SK-N-SH (cell line): ENCODE measurements at regions of chr18 and their contacts with region 1.

Region 1: DNA sequence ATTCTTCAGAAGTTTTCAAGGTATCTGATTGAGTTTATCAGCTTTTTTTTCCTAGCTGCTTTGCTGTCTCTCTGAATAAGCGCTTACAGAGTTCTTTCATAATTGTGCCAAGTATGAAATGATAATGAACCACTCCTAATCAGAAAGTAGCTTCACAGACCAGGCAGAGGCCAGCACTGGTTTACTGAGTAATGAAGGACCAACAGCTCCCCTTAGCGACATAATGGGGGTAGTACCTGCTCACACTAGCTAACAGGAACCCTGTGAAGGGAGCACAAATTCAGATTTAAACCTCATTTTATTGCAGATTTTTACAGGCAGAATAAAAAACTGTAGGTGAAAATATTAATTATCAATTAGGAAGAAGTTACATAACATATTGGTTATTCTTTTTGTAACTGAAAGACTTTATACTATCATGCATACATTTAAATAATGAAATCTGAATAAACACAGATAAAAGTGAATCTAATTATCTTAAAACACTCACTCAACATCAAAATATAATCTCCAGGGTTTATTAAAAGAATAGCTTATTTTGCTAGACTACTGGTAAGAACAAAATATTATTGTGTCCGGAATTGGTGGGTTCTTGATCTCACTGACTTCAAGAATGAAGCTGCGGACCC is 53.7 kb upstream of the LRRC30 start:
- DNase-seq: peak; percentile 86
- H3K4me3 ChIP-seq: no peak overlapping the region; a peak in 1 of 4 replicates
- H3K27ac ChIP-seq: no peak overlapping the region
- H3K4me1 ChIP-seq: no peaks in the 10 kb centered on the region
- H3K27me3 ChIP-seq: no peaks in the 10 kb centered on the region
- CTCF ChIP-seq: peak; percentile 58
- EP300 ChIP-seq: no peak
- RAD21 ChIP-seq: peak; percentile 91

Region 2: DNA sequence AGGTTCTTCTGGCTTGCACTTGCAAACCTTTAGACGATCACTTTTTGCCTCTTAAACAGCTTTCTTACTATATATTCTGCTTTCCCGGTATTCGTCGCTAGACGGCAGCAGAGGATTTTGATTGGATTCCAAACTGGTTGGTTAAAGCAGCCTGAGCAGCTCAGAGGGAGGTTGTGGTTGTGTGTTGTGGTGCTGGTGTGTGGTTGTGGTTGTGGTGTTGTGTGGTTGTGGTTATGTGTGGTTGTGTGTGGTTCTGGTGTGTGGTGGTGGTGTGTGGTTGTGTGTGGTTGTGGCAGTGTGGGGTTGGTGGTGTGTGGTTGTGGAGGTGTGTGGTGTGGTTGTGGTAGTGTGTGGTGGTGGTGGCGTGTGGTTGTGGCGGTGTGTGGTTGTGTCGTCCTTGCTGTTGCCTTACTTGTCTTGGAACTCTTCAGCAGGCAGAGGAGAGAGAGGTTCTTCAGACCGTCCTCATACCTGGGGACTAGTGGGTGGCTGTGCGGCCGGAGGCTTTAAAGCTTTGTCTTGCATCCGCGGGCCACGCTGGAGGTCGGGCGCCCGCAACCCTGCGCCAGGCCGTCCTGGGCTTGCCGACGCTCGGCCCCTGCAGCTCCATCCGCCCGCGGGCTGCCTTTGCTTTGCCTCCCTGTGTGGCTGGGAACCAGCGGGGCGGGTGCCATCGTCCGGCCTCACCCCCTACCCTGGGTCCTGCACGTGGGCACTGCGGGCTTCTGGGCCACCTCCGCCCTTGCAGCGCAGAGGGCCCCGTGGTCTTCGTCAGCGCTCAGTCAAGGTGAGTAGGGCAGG is 256.9 kb before region 1 on chr18:
- CTCF ChIA-PET with region 1: interaction called, 25 read pairs
- POLR2A ChIA-PET with region 1: no interaction called
- DNase-seq: peak; percentile 67
- H3K4me3 ChIP-seq: no peak overlapping the region; a peak in 1 of 4 replicates
- H3K27ac ChIP-seq: no peak overlapping the region
- H3K4me1 ChIP-seq: peaks cover 0 to 5% of the 10 kb centered on the region in 2 experiments; a peak in 1 of 4 replicates
- H3K27me3 ChIP-seq: no peaks in the 10 kb centered on the region
- CTCF ChIP-seq: peak; percentile 54
- EP300 ChIP-seq: no peak
- RAD21 ChIP-seq: peak; percentile 92

Region 3: GRCh38 chr18:7000484-7001096 is 176.6 kb before region 1 on chr18:
- CTCF ChIA-PET with region 1: interaction called, 10 read pairs
- POLR2A ChIA-PET with region 1: no interaction called
- DNase-seq: peak; percentile 59
- H3K4me3 ChIP-seq: no peak overlapping the region
- H3K27ac ChIP-seq: no peak overlapping the region
- H3K4me1 ChIP-seq: no peaks in the 10 kb centered on the region; a peak in 2 of 4 replicates
- H3K27me3 ChIP-seq: no peaks in the 10 kb centered on the region
- CTCF ChIP-seq: peak; percentile 51
- EP300 ChIP-seq: no peak
- RAD21 ChIP-seq: peak; percentile 86

Region 4: DNA sequence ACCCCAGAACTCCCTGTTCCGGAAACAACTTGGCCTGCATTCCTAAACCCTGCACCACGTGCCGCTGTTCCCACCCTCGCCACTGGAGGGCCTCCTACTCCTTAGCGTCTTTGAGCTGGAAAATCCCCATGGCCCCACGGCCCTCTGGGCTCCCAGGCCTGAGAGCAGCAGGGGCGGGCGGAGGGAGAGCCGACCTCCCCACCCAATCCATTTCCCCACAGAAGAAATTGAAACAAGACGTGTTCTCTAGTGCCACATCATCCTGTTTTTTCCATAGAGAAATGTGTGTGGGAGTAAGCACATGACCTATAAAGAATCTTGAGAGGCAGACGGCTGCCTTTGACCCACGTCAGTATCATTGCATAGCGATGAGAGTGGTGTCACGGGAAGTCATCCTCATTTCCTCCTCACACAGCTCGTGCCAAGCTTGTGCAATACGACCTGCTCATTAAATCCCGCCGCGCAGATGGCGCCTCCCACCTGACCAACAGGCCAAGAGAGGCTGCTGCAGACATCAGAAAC is 138.8 kb before region 1 on chr18:
- CTCF ChIA-PET with region 1: interaction called, 13 read pairs
- POLR2A ChIA-PET with region 1: no interaction called
- DNase-seq: peak; percentile 44
- H3K4me3 ChIP-seq: no peak overlapping the region; a peak in 1 of 4 replicates
- H3K27ac ChIP-seq: no peak overlapping the region
- H3K4me1 ChIP-seq: no peaks in the 10 kb centered on the region
- H3K27me3 ChIP-seq: no peaks in the 10 kb centered on the region
- CTCF ChIP-seq: peak; percentile 50
- EP300 ChIP-seq: no peak
- RAD21 ChIP-seq: peak; percentile 55

Region 5: DNA sequence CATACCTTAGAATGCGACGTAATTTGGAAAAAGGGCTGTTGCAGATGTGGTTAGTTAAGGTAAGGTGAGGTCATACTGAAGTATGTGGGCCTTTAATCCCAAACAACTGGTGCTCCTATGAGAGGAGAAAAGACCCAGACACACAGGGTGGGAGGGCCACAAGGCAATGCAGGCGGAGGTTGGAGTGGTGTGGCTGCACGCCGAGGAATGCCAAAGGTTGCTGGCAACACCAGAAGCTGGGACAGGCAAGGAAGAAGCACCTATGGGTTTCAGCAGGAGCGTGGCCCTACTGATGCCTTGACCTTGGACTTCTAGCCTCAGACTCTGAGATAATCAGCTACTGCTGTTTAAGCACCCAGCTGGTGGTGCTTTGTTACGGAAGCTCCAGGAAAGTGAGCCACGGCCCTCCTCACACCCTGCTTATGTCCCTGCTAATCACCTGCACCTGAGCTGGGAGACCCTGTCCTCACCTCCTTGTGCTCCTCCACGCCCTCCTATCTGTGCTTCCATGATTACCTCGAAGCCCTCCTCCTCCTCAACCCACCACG is 11.3 kb before region 1 on chr18:
- CTCF ChIA-PET with region 1: interaction called, 14 read pairs
- POLR2A ChIA-PET with region 1: no interaction called
- DNase-seq: no peak
- H3K4me3 ChIP-seq: no peak overlapping the region
- H3K27ac ChIP-seq: no peak overlapping the region
- H3K4me1 ChIP-seq: no peaks in the 10 kb centered on the region; a peak in 1 of 4 replicates
- H3K27me3 ChIP-seq: no peaks in the 10 kb centered on the region
- CTCF ChIP-seq: no peak
- EP300 ChIP-seq: no peak
- RAD21 ChIP-seq: no peak